Activated CD4-positive, alpha-beta memory T cell treated with anti-CD3 and anti-CD28 coated beads for 36 hours (primary cell): ENCODE measurements at regions of chr6 and their contacts with region 1.

Region 1: DNA sequence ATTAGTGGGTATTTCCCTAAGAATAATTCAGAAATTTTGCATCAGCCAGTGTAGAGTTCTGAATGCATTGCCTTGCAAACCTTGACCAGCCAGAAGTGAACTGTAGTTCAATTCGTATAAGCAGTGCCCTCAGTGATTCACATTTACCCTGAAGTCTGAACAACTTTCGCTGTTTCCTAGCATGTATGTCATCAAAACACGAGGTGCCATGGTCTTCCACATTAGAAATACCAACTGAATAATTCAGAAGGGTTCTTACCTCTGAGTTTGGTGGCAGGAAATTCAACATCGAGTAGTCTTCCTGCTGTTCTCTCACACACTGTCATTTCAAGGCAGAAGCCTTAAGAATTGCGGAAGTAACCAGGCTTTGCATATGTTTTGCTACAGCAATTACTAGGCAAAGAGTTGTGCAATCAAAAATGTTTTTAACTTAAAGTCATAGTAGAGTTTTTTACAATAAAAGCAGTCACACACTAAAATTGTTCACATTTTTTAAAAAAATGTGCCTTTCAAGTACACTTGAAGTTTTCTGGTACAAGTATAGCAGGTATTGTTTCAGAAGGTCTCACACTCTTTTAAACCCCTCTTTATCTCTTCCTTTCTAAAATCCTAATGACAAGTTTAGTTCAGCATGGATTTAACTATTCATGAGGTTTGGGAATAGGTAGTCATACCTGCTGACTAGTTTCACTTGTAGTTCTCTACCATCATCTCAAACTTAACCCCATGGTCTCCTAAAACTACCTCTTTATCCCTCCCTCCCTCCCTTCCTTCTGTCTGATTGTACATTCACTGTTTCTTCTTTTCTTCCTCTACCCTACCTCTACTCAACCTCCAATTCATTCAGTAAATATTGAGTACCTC is 118.3 kb downstream of the STXBP5 start:
- DNase-seq: peak; percentile 25
- H3K4me3 Mint-ChIP-seq: peak overlapping the region; percentile 28
- H3K27ac Mint-ChIP-seq: peak overlapping the region; percentile 90
- H3K4me1 Mint-ChIP-seq: peaks cover 17% of the 10 kb centered on the region
- H3K27me3 Mint-ChIP-seq: no peaks in the 10 kb centered on the region

Region 2: GRCh38 chr6:146950351-146950835 is 372.1 kb before region 1 on chr6:
- CTCF ChIA-PET with region 1: no interaction called
- POLR2A ChIA-PET with region 1: no interaction called
- intact Hi-C with region 1: loop called (anchors 1 kb)
- DNase-seq: peak; percentile 31
- H3K4me3 Mint-ChIP-seq: no peak overlapping the region
- H3K27ac Mint-ChIP-seq: peak overlapping the region; percentile 70
- H3K4me1 Mint-ChIP-seq: peaks cover 14% of the 10 kb centered on the region
- H3K27me3 Mint-ChIP-seq: no peaks in the 10 kb centered on the region

Region 3: DNA sequence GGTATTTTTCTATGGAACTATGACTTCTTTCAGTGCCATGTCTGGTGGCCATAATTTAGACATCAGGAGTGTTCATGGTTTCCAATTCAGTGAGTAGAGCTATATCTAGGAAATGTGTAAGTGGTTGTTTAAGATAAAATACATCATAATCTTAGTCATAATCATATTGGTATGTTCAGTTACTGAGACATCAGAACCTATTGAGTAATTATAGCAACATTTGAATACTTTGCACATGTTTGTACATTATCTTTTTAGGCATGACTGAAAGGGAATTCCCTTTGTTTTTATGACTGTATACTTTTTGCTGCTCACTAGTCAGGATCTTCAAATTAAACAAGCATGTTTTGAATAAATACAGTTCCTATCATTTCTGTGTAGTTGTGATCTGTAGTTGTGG is 54.3 kb before region 1 on chr6:
- CTCF ChIA-PET with region 1: no interaction called
- POLR2A ChIA-PET with region 1: no interaction called
- intact Hi-C with region 1: loop called (anchors 1 kb)
- DNase-seq: no peak
- H3K4me3 Mint-ChIP-seq: no peak overlapping the region
- H3K27ac Mint-ChIP-seq: peak overlapping the region; percentile 70
- H3K4me1 Mint-ChIP-seq: peaks cover 18% of the 10 kb centered on the region
- H3K27me3 Mint-ChIP-seq: no peaks in the 10 kb centered on the region

Region 4: DNA sequence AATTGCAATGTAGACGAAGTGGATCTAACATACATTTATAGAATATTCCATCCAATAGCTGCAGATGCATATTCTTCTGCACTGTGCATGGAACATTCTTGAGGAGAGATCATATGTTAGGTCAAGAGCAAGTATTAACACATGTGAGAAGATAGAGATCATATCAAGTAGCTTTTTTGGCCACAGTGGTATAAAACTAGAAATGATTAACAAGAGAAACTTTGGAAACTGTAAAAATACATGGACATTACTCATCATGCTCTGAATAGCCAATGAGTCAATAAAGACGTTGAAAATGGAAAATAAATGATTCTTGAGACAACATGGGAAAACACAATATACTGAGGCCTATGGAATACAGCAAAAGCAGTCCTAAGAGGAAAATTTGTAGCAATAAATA is 24.1 kb before region 1 on chr6:
- CTCF ChIA-PET with region 1: no interaction called
- POLR2A ChIA-PET with region 1: no interaction called
- intact Hi-C with region 1: loop called (anchors 1 kb)
- DNase-seq: no peak
- H3K4me3 Mint-ChIP-seq: no peak overlapping the region
- H3K27ac Mint-ChIP-seq: peak overlapping the region; percentile 7
- H3K4me1 Mint-ChIP-seq: peaks cover 23% of the 10 kb centered on the region
- H3K27me3 Mint-ChIP-seq: no peaks in the 10 kb centered on the region

Region 5: GRCh38 chr6:148440877-148441453 is 1118.4 kb after region 1 on chr6:
- CTCF ChIA-PET with region 1: no interaction called
- POLR2A ChIA-PET with region 1: no interaction called
- intact Hi-C with region 1: loop called (anchors 5 kb)
- DNase-seq: no peak
- H3K4me3 Mint-ChIP-seq: no peak overlapping the region
- H3K27ac Mint-ChIP-seq: no peak overlapping the region
- H3K4me1 Mint-ChIP-seq: peaks cover 9% of the 10 kb centered on the region
- H3K27me3 Mint-ChIP-seq: peaks cover 12% of the 10 kb centered on the region